HEK293 (cell line): ENCODE measurements at regions of chr1 and their contacts with region 1.

Region 1: GRCh38 chr1:205141236-205142101 is 19.7 kb upstream of the RBBP5 start:
- H3K4me3 ChIP-seq: no peak overlapping the region
- H3K27ac ChIP-seq: no peak overlapping the region
- H3K4me1 ChIP-seq: no peaks in the 10 kb centered on the region
- CTCF ChIP-seq: peak; percentile 67

Region 2: GRCh38 chr1:205121660-205122488 is 19.6 kb before region 1 on chr1 and contains the start of gene RBBP5:
- CTCF ChIA-PET with region 1: interaction called, 18 read pairs
- POLR2A ChIA-PET with region 1: interaction called, 6 read pairs
- H3K4me3 ChIP-seq: peak within 1 kb of the TSS; percentile 96
- H3K27ac ChIP-seq: peak within 1 kb of the TSS; percentile 71
- H3K4me1 ChIP-seq: 0 out of 2 replicates have a peak, but pooled peaks cover 2% of the 10 kb centered on the region
- CTCF ChIP-seq: peak; percentile 99

Region 3: GRCh38 chr1:205162301-205162700 is 20.8 kb after region 1 on chr1:
- CTCF ChIA-PET with region 1: interaction called, 15 read pairs
- POLR2A ChIA-PET with region 1: no interaction called
- H3K4me3 ChIP-seq: no peak overlapping the region
- H3K27ac ChIP-seq: no peak overlapping the region
- H3K4me1 ChIP-seq: no peaks in the 10 kb centered on the region
- CTCF ChIP-seq: no peak

Region 4: GRCh38 chr1:205217418-205217817 is 75.9 kb after region 1 on chr1:
- CTCF ChIA-PET with region 1: no interaction called
- POLR2A ChIA-PET with region 1: no interaction called
- H3K4me3 ChIP-seq: no peak overlapping the region
- H3K27ac ChIP-seq: no peak overlapping the region
- H3K4me1 ChIP-seq: no peaks in the 10 kb centered on the region
- CTCF ChIP-seq: no peak

Region 5: GRCh38 chr1:205354259-205354904 is 212.9 kb after region 1 on chr1:
- CTCF ChIA-PET with region 1: no interaction called
- POLR2A ChIA-PET with region 1: no interaction called
- H3K4me3 ChIP-seq: no peak overlapping the region
- H3K27ac ChIP-seq: no peak overlapping the region
- H3K4me1 ChIP-seq: no peaks in the 10 kb centered on the region; the same call in 1 of the 2 replicates
- CTCF ChIP-seq: no peak; the same call in 1 of the 2 replicates